ENCODE measurements at regions of chr6 and their contacts with region 1.

Region 1: DNA sequence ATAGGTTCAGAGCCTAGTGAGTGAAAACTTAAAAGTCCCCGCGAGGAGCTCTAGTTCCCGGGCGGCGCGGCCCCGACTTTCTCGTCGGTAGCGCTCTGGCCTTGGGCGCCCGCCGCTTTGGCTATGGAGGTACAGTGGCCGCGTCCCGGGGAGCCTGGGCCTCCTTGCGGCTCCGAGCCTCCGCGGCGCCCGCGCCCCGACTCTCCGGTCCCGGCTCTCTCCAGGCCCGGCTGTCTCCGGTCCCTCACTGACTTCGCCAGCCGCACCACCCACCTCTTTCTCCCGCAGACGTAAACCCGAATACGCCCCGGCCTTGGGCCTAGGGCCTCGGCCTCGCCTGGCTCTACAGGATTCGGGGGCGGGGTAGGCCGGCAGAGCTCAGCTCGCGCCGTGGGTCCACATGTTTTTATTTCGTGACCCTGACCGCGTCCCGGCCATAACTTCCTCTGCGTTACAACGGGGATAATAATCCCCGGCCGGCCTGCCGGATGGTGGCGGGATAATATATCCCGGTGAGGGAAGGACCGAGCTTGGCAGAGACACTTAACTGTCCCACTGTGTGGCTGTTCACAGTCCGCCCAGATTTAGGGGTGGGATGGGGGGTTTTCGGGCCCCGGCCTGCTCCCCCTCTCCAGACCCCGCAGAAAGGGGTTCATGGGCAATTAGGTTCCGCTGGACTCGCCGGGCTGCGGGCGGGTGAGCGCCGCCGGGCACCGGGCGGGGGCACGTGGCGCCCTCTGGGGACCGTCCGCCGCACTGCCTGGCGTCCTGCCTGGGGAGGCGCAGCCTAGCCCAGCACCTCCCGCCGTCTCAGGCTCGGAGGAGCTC is 10.0 kb upstream of the TBX18 start:
- DNase-seq: no peak
- ATAC-seq: peak; percentile 83
- H3K4me3 ChIP-seq: peak overlapping the region; percentile 49 to 61
- H3K27ac ChIP-seq: peak overlapping the region; percentile 64
- H3K4me1 ChIP-seq: peaks cover 0 to 9% of the 10 kb centered on the region in 2 experiments; a peak in 2 of 4 replicates
- H3K27me3 ChIP-seq: peaks cover 5% of the 10 kb centered on the region; the same call in 1 of the 2 replicates
- CTCF ChIP-seq: peak; percentile 43 to 58 (median 56); a peak in 5 of 6 replicates
- POLR2A ChIP-seq: no peak
- RAD21 ChIP-seq: peak; percentile 45

Region 2: DNA sequence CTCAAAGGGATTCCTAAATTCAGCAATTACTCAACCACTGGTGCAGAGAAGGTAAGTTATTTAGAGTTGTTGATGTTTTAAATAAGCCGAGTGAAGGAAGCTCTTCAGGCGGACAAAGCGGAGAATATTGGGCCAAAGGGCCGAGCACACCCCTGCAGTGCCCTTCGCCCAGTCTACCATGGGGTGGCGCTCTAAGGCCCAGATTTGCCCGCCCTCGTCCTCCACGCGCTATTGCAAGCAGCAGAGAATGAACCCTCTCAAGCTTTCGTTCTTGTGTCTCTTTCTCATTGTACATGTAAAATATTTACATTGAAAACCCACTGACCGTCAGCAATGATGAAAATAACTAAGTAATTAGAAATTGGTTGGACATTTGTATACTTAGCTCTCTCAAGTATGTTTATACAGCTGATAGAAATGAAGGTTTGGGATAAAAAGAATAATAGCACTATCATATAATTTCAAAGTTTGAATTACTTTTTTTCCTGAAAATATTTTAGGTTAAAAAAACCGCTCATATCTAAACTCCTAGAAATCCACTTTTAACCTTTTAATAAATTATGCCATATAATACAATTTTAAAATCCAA is 351.9 kb before region 1 on chr6:
- CTCF ChIA-PET with region 1: interaction called, 10 read pairs
- POLR2A ChIA-PET with region 1: no interaction called
- RAD21 ChIA-PET with region 1: interaction called in 1 of 2 experiments, 3 read pairs
- intact Hi-C with region 1: loop called (anchors 10 kb)
- DNase-seq: peak; percentile 31
- ATAC-seq: peak; percentile 99
- H3K4me3 ChIP-seq: peak overlapping the region in 1 of 2 experiments; percentile 20; a peak in 1 of 4 replicates
- H3K27ac ChIP-seq: no peak overlapping the region
- H3K4me1 ChIP-seq: 0 out of 4 replicates have a peak, but pooled peaks cover 0 to 3% of the 10 kb centered on the region in 2 experiments
- H3K27me3 ChIP-seq: 0 out of 2 replicates have a peak, but pooled peaks cover 8% of the 10 kb centered on the region
- CTCF ChIP-seq: peak; percentile 79 to 97 (median 93)
- POLR2A ChIP-seq: no peak
- RAD21 ChIP-seq: peak; percentile 84

Region 3: DNA sequence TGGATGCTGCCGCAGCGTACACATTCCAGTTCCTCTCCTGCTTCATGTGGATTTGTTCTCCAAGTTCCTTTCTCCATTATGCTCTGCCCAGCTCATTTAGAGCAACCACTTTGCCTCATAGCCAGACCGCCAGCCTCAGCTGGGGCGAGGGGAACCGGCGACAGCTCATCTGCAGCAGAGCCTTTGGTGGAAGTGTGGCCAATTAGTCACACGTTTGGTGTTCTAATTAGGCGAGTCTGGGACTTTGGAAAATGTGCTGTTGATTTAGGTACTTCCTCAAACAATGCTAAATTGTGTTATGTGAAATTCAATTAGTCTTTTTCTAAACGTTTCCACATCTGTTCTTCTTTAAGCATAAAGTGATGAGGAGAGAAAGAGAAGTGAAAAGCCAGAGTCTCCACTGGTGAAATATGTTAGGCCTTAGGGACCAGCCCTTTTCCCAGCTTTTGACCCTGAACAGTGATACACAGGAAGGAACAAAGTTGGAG is 227.9 kb before region 1 on chr6:
- CTCF ChIA-PET with region 1: no interaction called
- POLR2A ChIA-PET with region 1: no interaction called
- RAD21 ChIA-PET with region 1: no interaction called
- intact Hi-C with region 1: no loop called
- DNase-seq: no peak
- ATAC-seq: no peak
- H3K4me3 ChIP-seq: no peak overlapping the region
- H3K27ac ChIP-seq: no peak overlapping the region
- H3K4me1 ChIP-seq: peaks cover 0 to 6% of the 10 kb centered on the region in 2 experiments; a peak in 1 of 4 replicates
- H3K27me3 ChIP-seq: no peaks in the 10 kb centered on the region
- CTCF ChIP-seq: no peak
- POLR2A ChIP-seq: no peak
- RAD21 ChIP-seq: no peak